ENCODE measurements at regions of chrX and their contacts with region 1.

Region 1: GRCh38 chrX:150365051-150365989 is 2.2 kb downstream of the MAMLD1 start:
- DNase-seq: peak; percentile 86 to 92
- ATAC-seq: peak; percentile 79
- H3K4me3 ChIP-seq: peak overlapping the region; percentile 26 to 31
- H3K27ac ChIP-seq: peak overlapping the region; percentile 10 to 88
- H3K4me1 ChIP-seq: no peaks in the 10 kb centered on the region
- H3K27me3 ChIP-seq: no peaks in the 10 kb centered on the region

Region 2: GRCh38 chrX:150084496-150085229 is 280.7 kb before region 1 on chrX:
- intact Hi-C with region 1: loop called in 1 of 2 experiments (anchors 10 kb)
- DNase-seq: no peak
- ATAC-seq: peak; percentile 12
- H3K4me3 ChIP-seq: no peak overlapping the region
- H3K27ac ChIP-seq: peak overlapping the region; percentile 38 to 97
- H3K4me1 ChIP-seq: peaks cover 2 to 5% of the 10 kb centered on the region in 2 donors
- H3K27me3 ChIP-seq: no peaks in the 10 kb centered on the region

Region 3: DNA sequence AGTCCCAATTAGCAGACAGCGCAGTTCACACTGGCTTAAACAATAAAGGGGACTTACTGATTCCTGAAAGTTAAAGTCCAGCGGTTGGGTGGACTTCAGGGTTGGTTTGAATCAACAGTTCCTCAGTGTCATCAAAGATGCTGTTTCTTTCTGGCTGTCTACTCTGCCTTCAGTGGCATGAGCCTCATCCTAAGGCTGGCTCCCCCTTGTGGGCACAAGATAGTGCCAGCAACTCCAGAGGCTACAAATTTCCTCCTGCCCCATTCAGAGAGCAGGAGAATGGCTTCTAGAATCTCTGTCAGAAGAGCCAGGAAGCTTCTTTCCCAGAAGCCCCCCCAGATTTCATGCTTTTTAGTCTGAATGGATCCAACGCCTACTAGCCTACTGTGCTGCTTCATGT is 120.7 kb after region 1 on chrX:
- intact Hi-C with region 1: loop called in 1 of 2 experiments (anchors 5 kb)
- DNase-seq: peak in 1 of 2 donors; percentile 63
- ATAC-seq: no peak
- H3K4me3 ChIP-seq: no peak overlapping the region
- H3K27ac ChIP-seq: no peak overlapping the region
- H3K4me1 ChIP-seq: no peaks in the 10 kb centered on the region
- H3K27me3 ChIP-seq: no peaks in the 10 kb centered on the region

Region 4: GRCh38 chrX:150587585-150588503 is 222.5 kb after region 1 on chrX:
- intact Hi-C with region 1: loop called in 1 of 2 experiments (anchors 10 kb)
- DNase-seq: no peak
- ATAC-seq: no peak
- H3K4me3 ChIP-seq: no peak overlapping the region
- H3K27ac ChIP-seq: no peak overlapping the region
- H3K4me1 ChIP-seq: no peaks in the 10 kb centered on the region
- H3K27me3 ChIP-seq: no peaks in the 10 kb centered on the region